ENCODE measurements at regions of chr16 and their contacts with region 1.

Region 1: DNA sequence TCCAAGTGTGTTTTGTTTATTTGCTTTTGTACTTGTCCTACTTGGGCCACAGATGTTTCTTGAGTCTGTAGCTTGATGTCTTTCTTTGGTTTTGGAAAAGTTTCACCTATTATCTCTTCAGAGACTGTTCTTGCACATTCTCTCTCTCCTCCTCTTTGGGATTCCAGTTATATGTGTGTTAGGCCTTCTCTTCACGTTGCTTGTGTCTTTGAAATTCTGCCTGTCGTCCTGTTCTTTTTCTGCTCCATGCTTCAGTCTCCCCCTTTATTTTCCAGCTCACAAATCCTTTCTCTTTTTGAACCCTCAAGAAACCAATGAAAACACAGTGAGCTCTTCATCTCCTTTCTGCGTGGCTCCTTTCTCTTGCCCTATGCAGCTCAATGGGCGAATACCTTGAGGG is 7.9 kb downstream of the VPS35L start:
- DNase-seq: no peak
- ATAC-seq: no peak

Region 2: GRCh38 chr16:19621445-19621844 is 58.1 kb after region 1 on chr16:
- intact Hi-C with region 1: loop called (anchors 10 kb)
- DNase-seq: no peak
- ATAC-seq: no peak

Region 3: GRCh38 chr16:19636436-19637270 is 73.3 kb after region 1 on chr16:
- intact Hi-C with region 1: no loop called
- DNase-seq: no peak
- ATAC-seq: no peak

Region 4: DNA sequence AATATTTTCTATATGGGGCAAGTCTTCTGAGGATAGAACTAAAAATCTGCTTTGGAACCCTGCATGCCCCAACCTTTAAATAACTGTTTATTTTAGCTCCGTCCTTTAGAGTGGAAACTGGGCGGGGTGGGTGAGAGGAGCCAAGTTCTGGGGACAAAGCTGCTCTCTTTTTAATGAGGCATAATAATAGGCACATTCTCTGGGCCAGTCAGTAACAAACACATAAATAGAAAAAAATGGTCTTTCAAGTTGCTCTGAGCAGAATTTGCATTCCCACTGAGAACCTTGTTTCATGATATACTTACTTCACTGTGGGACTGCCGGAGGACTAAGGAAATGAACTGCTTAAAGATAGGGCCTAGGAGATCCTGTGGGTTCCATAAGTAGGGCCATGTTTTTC is 103.1 kb after region 1 on chr16:
- intact Hi-C with region 1: no loop called
- DNase-seq: no peak
- ATAC-seq: peak; percentile 71

Region 5: GRCh38 chr16:19677402-19677801 is 114.0 kb after region 1 on chr16:
- intact Hi-C with region 1: no loop called
- DNase-seq: no peak
- ATAC-seq: peak; percentile 71